Activated B cell treated with CpG ODN at 0.5 μM for 24 hours (primary cell): ENCODE measurements at regions of chr12 and their contacts with region 1.

Region 1: DNA sequence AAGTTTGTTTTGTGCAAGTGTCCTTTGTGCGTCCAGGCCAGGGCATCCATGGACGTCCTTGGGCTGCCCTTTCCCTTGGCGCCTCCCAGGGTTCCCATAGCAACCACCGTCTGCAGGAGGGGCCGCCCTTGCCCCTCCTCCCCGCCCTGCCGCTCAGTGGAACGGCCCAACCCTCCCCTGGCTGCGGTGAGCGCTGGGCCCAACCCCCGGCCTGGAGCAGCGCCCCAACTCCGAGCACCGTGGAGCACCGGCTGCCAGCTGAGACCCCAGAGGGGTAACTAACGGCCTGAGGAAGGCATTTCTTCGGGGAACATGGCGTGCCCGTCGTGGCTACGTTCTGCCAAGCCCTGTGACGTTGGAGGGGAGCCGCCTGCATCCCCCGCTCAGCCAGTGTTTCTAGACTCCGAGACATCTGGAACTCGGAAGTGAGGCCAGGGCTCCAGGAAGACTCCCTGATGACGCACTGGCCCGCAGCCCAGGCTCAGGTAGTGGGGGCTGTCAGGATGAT is 5.3 kb upstream of the ACACB start:
- DNase-seq: peak; percentile 31
- ATAC-seq: peak; percentile 86
- H3K4me3 Mint-ChIP-seq: peak overlapping the region; percentile 77
- H3K27ac Mint-ChIP-seq: no peak overlapping the region
- H3K4me1 Mint-ChIP-seq: peaks cover 6% of the 10 kb centered on the region
- H3K27me3 Mint-ChIP-seq: no peaks in the 10 kb centered on the region
- CTCF ChIP-seq: no peak

Region 2: DNA sequence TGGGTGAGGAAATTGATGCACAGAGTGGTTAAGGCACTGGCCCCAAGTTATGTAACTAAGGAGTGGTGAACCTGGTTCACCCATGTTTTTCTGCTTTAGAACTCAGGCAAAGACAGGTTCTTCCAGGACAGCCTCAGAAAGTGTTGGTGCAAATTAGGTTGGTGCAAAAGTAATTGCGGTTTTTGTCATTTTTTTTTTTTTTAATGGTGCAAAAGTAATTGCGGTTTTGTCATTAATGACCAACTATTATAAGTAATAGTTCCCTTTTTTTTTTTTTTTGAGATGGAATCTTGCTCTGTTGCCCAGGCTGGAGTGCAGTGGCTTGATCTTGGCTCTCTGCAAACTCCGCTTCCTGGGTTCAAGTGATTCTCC is 248.5 kb before region 1 on chr12:
- CTCF ChIA-PET with region 1: no interaction called
- POLR2A ChIA-PET with region 1: no interaction called
- intact Hi-C with region 1: no loop called
- DNase-seq: no peak
- ATAC-seq: no peak
- H3K4me3 Mint-ChIP-seq: no peak overlapping the region
- H3K27ac Mint-ChIP-seq: peak overlapping the region; percentile 27
- H3K4me1 Mint-ChIP-seq: peaks cover 42% of the 10 kb centered on the region
- H3K27me3 Mint-ChIP-seq: no peaks in the 10 kb centered on the region
- CTCF ChIP-seq: no peak

Region 3: GRCh38 chr12:109154451-109155438 is 43.7 kb after region 1 on chr12:
- CTCF ChIA-PET with region 1: no interaction called
- POLR2A ChIA-PET with region 1: no interaction called
- intact Hi-C with region 1: loop called (anchors 2 kb)
- DNase-seq: peak; percentile 76
- ATAC-seq: peak; percentile 97
- H3K4me3 Mint-ChIP-seq: peak overlapping the region; percentile 95
- H3K27ac Mint-ChIP-seq: peak overlapping the region; percentile 90
- H3K4me1 Mint-ChIP-seq: peaks cover 24% of the 10 kb centered on the region
- H3K27me3 Mint-ChIP-seq: peaks cover 12% of the 10 kb centered on the region
- CTCF ChIP-seq: no peak

Region 4: GRCh38 chr12:109182041-109182839 is 71.2 kb after region 1 on chr12:
- CTCF ChIA-PET with region 1: no interaction called
- POLR2A ChIA-PET with region 1: no interaction called
- intact Hi-C with region 1: no loop called
- DNase-seq: no peak
- ATAC-seq: no peak
- H3K4me3 Mint-ChIP-seq: no peak overlapping the region
- H3K27ac Mint-ChIP-seq: no peak overlapping the region
- H3K4me1 Mint-ChIP-seq: no peaks in the 10 kb centered on the region
- H3K27me3 Mint-ChIP-seq: no peaks in the 10 kb centered on the region
- CTCF ChIP-seq: no peak

Region 5: DNA sequence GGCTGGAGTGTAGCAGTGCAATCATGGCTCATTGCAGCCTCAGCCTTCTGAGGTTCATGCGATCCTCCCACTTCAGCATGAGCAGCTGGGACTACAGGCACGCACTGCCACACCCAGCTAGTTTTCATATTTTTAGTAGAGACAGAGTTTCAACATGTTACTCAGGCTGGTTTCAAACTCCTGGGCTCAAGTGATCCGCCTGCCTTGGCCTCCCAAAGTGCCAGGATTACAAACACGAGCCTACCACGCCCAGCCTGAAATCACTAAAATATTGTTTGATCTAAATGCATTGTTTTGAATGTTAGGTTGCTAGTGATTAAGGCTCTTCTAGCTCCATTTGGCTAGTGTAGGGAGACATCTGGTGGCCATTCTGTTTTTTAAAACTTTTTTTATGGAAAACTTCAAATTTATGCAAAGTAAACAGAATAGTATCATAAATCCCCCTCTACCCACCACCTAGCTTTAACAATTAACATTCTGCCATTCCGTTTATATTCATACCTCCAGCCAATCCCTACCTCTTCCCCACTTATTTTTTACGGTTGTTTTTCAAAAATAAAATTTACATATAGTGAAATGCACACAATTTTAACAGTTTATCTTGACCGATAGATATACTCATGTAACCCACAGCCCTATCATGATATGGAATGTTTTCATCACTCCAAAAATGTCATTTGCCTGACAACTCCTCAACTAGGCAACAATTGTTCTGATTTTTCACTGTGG is 274.5 kb after region 1 on chr12:
- CTCF ChIA-PET with region 1: interaction called, 14 read pairs
- POLR2A ChIA-PET with region 1: no interaction called
- intact Hi-C with region 1: no loop called
- DNase-seq: no peak
- ATAC-seq: no peak
- H3K4me3 Mint-ChIP-seq: no peak overlapping the region
- H3K27ac Mint-ChIP-seq: no peak overlapping the region
- H3K4me1 Mint-ChIP-seq: no peaks in the 10 kb centered on the region
- H3K27me3 Mint-ChIP-seq: peaks cover 4% of the 10 kb centered on the region
- CTCF ChIP-seq: no peak

Region 6: GRCh38 chr12:109393437-109394345 is 282.6 kb after region 1 on chr12:
- CTCF ChIA-PET with region 1: interaction called, 13 read pairs
- POLR2A ChIA-PET with region 1: no interaction called
- intact Hi-C with region 1: loop called (anchors 2 kb)
- DNase-seq: no peak
- ATAC-seq: no peak
- H3K4me3 Mint-ChIP-seq: no peak overlapping the region
- H3K27ac Mint-ChIP-seq: no peak overlapping the region
- H3K4me1 Mint-ChIP-seq: no peaks in the 10 kb centered on the region
- H3K27me3 Mint-ChIP-seq: peaks cover 12% of the 10 kb centered on the region
- CTCF ChIP-seq: no peak